Right ventricle myocardium inferior (tissue), 1 donor: ENCODE measurements at regions of chr10 and their contacts with region 1.

Region 1: DNA sequence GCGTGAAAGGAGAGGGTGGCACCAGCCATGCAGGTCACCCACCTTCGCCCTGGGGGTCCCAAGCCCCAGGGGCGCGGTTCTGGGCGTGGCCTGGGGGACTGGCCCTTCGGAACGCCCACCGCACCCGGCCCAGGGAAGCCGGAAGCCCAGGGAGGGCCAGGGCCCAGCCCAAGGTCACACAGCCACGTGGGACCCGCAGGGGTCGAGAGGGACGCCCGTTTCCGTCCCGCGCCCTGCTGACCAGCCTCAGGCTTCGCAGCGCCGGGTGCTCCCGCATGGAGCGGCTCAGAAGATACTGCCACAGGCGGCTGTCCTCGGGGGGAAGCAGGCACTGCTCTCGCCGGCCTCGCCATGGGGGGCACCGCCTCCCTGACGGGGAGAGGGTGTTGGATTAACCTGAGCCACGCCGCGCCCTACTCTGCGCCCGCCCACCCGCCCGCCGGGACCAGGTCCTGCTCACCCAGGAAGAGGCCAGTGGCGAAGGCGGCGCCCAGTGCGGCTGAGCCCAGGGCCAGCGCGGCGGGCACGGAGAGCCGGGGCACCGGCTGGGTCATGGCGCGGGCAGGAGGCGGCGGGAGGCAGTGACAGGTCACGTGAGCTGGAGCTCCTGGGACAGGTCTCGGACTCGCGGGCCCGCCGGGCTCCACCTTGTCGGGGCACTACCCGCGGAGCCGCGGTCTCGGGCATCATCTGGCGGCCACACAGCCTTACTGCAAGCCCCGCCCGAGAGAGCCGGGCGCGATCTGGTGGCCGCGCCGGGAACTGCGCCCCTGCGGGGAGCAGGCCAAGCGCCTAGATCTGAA is at the start of gene COMTD1:
- DNase-seq: peak; percentile 98
- ATAC-seq: peak; percentile 83
- total RNA-seq, gene COMTD1: 32.3 TPM

Region 2: GRCh38 chr10:74244097-74244685 is 991.4 kb before region 1 on chr10:
- intact Hi-C with region 1: loop called (anchors 5 kb)
- DNase-seq: no peak
- ATAC-seq: no peak

Region 3: DNA sequence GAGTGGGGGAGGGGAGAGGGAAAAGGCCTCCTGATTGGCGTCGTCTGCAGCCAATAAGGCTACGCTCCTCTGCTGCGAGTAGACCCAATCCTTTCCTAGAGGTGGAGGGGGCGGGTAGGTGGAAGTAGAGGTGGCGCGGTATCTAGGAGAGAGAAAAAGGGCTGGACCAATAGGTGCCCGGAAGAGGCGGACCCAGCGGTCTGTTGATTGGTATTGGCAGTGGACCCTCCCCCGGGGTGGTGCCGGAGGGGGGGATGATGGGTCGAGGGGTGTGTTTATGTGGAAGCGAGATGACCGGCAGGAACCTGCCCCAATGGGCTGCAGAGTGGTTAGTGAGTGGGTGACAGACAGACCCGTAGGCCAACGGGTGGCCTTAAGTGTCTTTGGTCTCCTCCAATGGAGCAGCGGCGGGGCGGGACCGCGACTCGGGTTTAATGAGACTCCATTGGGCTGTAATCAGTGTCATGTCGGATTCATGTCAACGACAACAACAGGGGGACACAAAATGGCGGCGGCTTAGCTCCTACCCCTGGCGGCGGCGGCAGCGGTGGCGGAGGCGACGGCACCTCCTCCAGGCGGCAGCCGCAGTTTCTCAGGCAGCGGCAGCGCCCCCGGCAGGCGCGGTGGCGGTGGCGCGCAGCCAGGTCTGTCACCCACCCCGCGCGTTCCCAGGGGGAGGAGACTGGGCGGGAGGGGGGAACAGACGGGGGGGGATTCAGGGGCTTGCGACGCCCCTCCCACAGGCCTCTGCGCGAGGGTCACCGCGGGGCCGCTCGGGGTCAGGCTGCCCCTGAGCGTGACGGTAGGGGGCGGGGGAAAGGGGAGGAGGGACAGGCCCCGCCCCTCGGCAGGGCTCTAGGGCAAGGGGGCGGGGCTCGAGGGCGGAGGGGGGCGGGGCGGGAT is 409.2 kb before region 1 on chr10 and contains the start of gene KAT6B:
- intact Hi-C with region 1: loop called (anchors 10 kb)
- DNase-seq: peak; percentile 100
- ATAC-seq: peak; percentile 94
- total RNA-seq, gene KAT6B: 42.6 TPM

Region 4: GRCh38 chr10:75111367-75111906 is 124.1 kb before region 1 on chr10 and contains the start of gene SAMD8:
- intact Hi-C with region 1: loop called (anchors 2 kb)
- DNase-seq: peak; percentile 99
- ATAC-seq: peak; percentile 93
- total RNA-seq, gene SAMD8: 21.9 TPM

Region 5: DNA sequence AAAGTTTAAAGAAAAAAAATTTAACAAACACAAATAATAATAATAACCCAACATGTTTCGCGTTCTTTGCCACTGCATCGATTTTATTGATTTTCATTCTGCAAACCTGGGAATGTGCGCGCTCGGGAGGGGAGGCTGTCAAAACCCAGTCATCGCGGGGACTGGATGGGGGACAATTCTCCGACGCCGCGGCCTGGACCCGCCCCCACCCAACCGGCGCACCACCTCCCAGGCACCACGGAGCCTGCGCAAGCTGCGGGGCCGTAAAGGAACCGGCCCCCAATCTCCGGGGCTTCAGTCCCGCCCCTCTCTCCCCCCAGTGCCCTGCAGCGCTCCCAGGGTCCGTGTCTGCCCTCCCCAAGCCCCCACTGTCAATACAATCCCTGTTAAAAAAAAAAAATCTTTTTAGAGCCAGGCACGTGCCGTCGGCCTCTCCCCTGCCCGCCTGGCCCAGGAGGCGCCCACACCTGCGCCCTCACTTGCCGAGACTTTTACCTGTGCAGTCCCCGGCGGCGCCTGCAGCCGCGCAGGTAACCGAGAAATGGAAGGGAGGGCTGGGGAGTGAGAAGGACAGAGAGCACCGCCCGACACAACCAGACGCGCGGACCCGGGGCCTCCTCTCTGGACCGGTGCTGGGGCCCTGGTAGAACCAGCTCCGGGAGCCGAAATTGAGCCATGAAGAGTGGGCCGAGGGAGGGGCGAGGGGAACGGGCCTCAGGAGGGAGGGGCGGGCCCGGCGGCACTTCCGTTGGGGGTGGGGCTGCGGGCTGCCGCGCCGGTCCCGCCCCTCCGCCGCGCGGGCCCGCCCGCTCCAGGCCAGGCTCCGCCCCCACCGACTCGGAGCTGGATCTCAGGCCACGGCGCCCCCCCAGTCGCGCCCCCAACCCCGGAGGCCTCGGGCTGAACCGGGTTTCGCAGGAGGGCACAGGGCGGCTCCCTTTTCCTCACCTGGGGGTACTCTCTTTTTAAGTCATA is 173.6 kb after region 1 on chr10:
- intact Hi-C with region 1: no loop called
- DNase-seq: peak; percentile 89
- ATAC-seq: peak; percentile 93